K562 (cell line): ENCODE measurements at regions of chr11 and their contacts with region 1.

Region 1: DNA sequence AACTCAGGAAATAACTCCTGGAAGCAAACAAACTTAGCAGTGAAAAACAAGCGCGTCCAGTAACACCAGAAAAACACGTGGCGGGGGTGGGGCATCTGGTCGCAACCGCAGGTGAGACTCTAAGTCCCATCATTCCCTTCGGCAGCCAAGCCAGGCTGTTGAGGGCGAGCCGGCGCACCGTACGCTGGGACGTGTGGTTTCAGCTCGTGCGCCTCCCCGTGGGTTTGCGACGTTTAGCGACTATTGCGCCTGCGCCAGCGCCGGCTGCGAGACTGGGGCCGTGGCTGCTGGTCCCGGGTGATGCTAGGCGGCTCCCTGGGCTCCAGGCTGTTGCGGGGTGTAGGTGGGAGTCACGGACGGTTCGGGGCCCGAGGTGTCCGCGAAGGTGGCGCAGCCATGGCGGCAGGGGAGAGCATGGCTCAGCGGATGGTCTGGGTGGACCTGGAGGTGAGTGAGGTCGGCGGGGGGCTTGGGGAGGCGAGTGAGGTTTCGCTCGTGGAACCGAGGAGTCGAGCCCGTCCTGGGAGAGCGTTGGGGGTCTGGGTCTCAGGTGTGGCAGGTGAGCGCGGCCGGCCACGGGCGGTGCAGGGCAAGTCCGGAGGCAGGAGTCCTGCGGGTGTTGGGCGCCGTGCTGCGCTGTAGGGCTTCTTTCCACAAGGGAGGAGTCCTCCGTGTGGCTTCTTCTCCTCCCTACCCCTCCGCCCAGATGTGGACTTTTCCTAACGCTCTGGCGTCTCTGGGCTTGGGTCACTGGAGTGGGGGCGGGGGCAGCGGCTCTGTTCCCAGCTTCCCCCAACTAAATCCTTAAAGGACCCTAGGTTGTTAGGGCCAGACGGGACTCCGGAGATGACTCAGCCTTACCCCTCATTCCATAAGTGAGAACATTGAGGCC is at the start of gene REXO2:
- DNase-seq: peak; percentile 90 to 98 (median 92)
- ATAC-seq: peak; percentile 89
- H3K4me3 ChIP-seq: peak within 1 kb of the TSS; percentile 82
- H3K27ac ChIP-seq: peak within 1 kb of the TSS; percentile 85
- H3K4me1 ChIP-seq: peaks cover 7 to 16% of the 10 kb centered on the region in 2 experiments; a peak in 3 of 5 replicates
- H3K27me3 ChIP-seq: no peaks in the 10 kb centered on the region
- CTCF ChIP-seq: peak; percentile 7 to 42 (median 27); a peak in 4 of 6 replicates
- EP300 ChIP-seq: peak; percentile 37
- POLR2A ChIP-seq: peak; percentile 88
- RAD21 ChIP-seq: peak; percentile 7 to 23; a peak in 1 of 4 replicates
- polyA plus RNA-seq, gene REXO2: 143 to 151 TPM

Region 2: GRCh38 chr11:114295676-114296604 is 143.5 kb before region 1 on chr11 and contains the start of gene NNMT:
- CTCF ChIA-PET with region 1: interaction called, 4 read pairs
- POLR2A ChIA-PET with region 1: no interaction called
- in situ Hi-C with region 1: no loop called
- intact Hi-C with region 1: loop called (anchors 5 kb)
- DNase-seq: peak in 2 of 4 experiments; percentile 26 to 30
- ATAC-seq: peak; percentile 37
- H3K4me3 ChIP-seq: peak within 1 kb of the TSS; percentile 25
- H3K27ac ChIP-seq: peak within 1 kb of the TSS; percentile 86
- H3K4me1 ChIP-seq: peaks cover 9 to 54% of the 10 kb centered on the region in 2 experiments
- H3K27me3 ChIP-seq: no peaks in the 10 kb centered on the region
- CTCF ChIP-seq: no peak
- EP300 ChIP-seq: no peak
- POLR2A ChIP-seq: no peak
- RAD21 ChIP-seq: no peak
- polyA plus RNA-seq, gene NNMT: 10.0 to 13.4 TPM

Region 3: DNA sequence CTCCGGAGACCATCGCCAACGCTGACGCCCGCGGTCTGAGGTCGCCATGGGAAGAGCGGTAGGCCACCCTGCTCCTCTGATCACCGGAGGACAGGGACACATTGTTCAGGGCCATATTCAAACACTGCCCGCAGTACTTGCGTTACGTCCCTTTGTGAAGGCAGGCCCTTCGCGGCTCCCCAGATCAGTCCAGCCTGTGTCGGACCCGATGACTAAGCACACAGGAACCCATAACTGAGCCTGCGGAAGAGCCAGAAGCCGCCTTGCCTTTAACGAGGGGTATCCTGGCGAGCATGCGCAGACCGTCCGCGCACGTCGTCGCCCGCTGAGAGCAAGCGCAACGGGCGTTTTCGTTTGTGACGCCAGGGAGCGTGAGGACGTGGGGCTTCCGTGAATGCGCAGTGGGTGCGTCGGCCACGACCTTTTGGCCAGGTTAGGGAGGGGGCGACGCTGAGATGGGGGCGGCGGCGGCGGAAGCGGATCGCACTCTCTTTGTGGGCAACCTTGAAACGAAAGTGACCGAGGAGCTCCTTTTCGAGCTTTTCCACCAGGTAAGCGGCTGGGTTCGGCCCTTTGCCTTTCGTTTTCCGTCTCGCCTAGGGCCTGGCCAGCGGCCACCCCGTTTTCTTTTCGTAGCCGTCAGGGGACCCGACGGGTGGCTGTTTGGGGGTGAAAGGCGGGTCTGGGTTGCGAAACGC is 39.1 kb before region 1 on chr11 and contains the starts of genes C11orf71 and RBM7:
- CTCF ChIA-PET with region 1: interaction called, 3 read pairs
- POLR2A ChIA-PET with region 1: interaction called, 3 read pairs
- in situ Hi-C with region 1: no loop called
- intact Hi-C with region 1: loop called (anchors 1 kb)
- DNase-seq: peak; percentile 90 to 99 (median 92)
- ATAC-seq: peak; percentile 90
- H3K4me3 ChIP-seq: peak within 1 kb of the TSS; percentile 54
- H3K27ac ChIP-seq: peak within 1 kb of the TSS; percentile 99
- H3K4me1 ChIP-seq: peaks cover 3 to 25% of the 10 kb centered on the region in 2 experiments
- H3K27me3 ChIP-seq: no peaks in the 10 kb centered on the region
- CTCF ChIP-seq: peak in 1 of 3 experiments; percentile 18; a peak in 1 of 6 replicates
- EP300 ChIP-seq: peak; percentile 28; the same call in 1 of the 2 replicates
- POLR2A ChIP-seq: peak; percentile 98
- RAD21 ChIP-seq: no peak
- polyA plus RNA-seq, gene C11orf71: 2.9 to 4.3 TPM
- polyA plus RNA-seq, gene RBM7: 62.7 to 76.8 TPM

Region 4: DNA sequence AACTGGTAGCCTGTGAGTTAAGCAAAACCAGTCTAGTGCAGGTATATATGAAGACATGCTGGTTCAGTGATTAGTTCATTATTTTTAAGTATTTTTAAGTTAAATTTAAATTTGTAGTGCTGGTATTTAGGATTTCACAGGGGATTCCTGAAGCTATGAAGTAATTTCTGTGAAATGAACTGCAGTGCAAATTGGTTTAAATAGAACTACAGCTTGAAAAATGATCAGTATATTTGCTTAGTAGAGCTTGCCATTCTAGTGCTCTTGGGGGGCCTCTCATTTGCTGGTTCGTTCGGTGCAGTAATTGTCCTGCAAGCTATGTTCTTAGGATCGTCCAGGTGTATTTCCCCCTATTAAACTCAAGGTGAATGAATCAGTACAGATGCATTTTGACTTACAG is 12.9 kb after region 1 on chr11:
- CTCF ChIA-PET with region 1: no interaction called
- POLR2A ChIA-PET with region 1: interaction called, 12 read pairs
- in situ Hi-C with region 1: no loop called
- intact Hi-C with region 1: no loop called
- DNase-seq: no peak
- ATAC-seq: no peak
- H3K4me3 ChIP-seq: no peak overlapping the region
- H3K27ac ChIP-seq: no peak overlapping the region
- H3K4me1 ChIP-seq: peaks cover 0 to 6% of the 10 kb centered on the region in 2 experiments; a peak in 3 of 5 replicates
- H3K27me3 ChIP-seq: no peaks in the 10 kb centered on the region
- CTCF ChIP-seq: no peak
- EP300 ChIP-seq: no peak
- POLR2A ChIP-seq: no peak
- RAD21 ChIP-seq: no peak